Mammary epithelial cell (primary cell): ENCODE measurements at regions of chr7 and their contacts with region 1.

Region 1: GRCh38 chr7:122988333-122988732 is 7.2 kb downstream of the TAS2R16 start:
- DNase-seq: no peak
- H3K4me3 ChIP-seq: no peak overlapping the region
- H3K27ac ChIP-seq: no peak overlapping the region
- H3K4me1 ChIP-seq: no peaks in the 10 kb centered on the region
- H3K27me3 ChIP-seq: no peaks in the 10 kb centered on the region
- CTCF ChIP-seq: no peak

Region 2: GRCh38 chr7:122951006-122951405 is 37.3 kb before region 1 on chr7:
- CTCF ChIA-PET with region 1: no interaction called
- dilution Hi-C with region 1: loop called (anchors 5 kb)
- in situ Hi-C with region 1: no loop called
- intact Hi-C with region 1: no loop called
- DNase-seq: peak; percentile 55
- H3K4me3 ChIP-seq: no peak overlapping the region
- H3K27ac ChIP-seq: no peak overlapping the region
- H3K4me1 ChIP-seq: peaks cover 4% of the 10 kb centered on the region
- H3K27me3 ChIP-seq: no peaks in the 10 kb centered on the region
- CTCF ChIP-seq: no peak

Region 3: GRCh38 chr7:123070702-123071286 is 82.5 kb after region 1 on chr7:
- CTCF ChIA-PET with region 1: no interaction called
- dilution Hi-C with region 1: no loop called
- in situ Hi-C with region 1: no loop called
- intact Hi-C with region 1: no loop called
- DNase-seq: no peak
- H3K4me3 ChIP-seq: no peak overlapping the region
- H3K27ac ChIP-seq: no peak overlapping the region
- H3K4me1 ChIP-seq: no peaks in the 10 kb centered on the region
- H3K27me3 ChIP-seq: no peaks in the 10 kb centered on the region
- CTCF ChIP-seq: peak; percentile 54 to 56

Region 4: DNA sequence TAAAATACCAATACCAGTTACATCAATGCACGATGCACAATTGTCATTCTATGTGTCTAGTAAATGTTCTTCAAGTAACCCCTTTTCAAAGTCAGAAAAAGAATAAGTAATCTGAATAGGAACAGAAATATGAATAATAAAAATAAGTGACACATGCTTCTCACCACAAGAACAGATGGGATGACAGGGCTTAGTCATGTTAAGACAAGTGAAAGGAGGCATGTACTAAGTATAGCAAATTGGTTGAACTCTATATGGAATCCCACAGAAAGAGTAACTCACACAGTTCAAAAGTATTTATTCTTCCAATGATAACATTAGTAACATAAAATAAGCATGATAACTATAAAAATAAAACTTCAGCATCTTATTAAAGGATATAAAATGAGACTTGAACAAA is 108.1 kb after region 1 on chr7:
- CTCF ChIA-PET with region 1: no interaction called
- dilution Hi-C with region 1: no loop called
- in situ Hi-C with region 1: no loop called
- intact Hi-C with region 1: no loop called
- DNase-seq: peak; percentile 53
- H3K4me3 ChIP-seq: no peak overlapping the region
- H3K27ac ChIP-seq: no peak overlapping the region
- H3K4me1 ChIP-seq: no peaks in the 10 kb centered on the region
- H3K27me3 ChIP-seq: no peaks in the 10 kb centered on the region
- CTCF ChIP-seq: no peak